ENCODE measurements at regions of chr5 and their contacts with region 1.

Region 1: DNA sequence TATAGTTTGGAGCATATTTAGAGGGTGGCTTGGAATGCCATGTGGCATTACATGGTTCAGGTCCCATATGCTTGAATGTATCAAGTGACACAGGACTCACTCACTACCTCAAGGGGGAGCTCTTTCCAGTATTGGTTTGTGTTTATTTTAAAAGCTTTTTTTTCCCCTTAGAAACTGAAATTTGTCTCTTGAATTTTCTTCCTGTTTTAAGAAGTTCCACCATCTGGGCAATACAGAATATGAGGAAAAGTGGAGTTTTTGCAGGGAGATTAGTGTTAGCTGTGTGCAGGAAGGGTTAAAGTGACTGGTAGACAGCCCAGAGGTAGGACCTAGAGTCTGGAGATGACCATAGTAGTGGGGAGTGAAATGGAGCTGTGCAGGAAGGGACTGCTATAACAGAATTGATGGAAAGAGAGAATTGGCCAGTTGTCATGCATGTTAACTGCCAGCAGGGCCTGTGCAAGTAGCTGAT is 36.6 kb downstream of the CTNNA1 start:
- DNase-seq: peak; percentile 64
- CTCF ChIP-seq: peak; percentile 57

Region 2: GRCh38 chr5:138757061-138757776 is 32.6 kb before region 1 on chr5:
- CTCF ChIA-PET with region 1: interaction called, 18 read pairs
- POLR2A ChIA-PET with region 1: no interaction called
- DNase-seq: no peak
- CTCF ChIP-seq: no peak

Region 3: GRCh38 chr5:138778234-138778633 is 11.6 kb before region 1 on chr5:
- CTCF ChIA-PET with region 1: interaction called, 29 read pairs
- POLR2A ChIA-PET with region 1: no interaction called
- DNase-seq: no peak
- CTCF ChIP-seq: no peak

Region 4: GRCh38 chr5:138809391-138809790 is 19.6 kb after region 1 on chr5:
- CTCF ChIA-PET with region 1: interaction called, 46 read pairs
- POLR2A ChIA-PET with region 1: no interaction called
- DNase-seq: no peak
- CTCF ChIP-seq: no peak

Region 5: GRCh38 chr5:138824924-138825863 is 35.4 kb after region 1 on chr5:
- CTCF ChIA-PET with region 1: interaction called, 16 read pairs
- POLR2A ChIA-PET with region 1: no interaction called
- DNase-seq: peak; percentile 56
- CTCF ChIP-seq: peak; percentile 40